ENCODE measurements at regions of chr6 and their contacts with region 1.

Region 1: GRCh38 chr6:33200219-33201146 is at the starts of genes RXRB and SLC39A7:
- DNase-seq: peak; percentile 100
- H3K4me3 ChIP-seq: peak within 1 kb of the TSS; percentile 80
- H3K27ac ChIP-seq: peak within 1 kb of the TSS; percentile 95
- H3K4me1 ChIP-seq: peaks cover 25% of the 10 kb centered on the region
- H3K27me3 ChIP-seq: no peaks in the 10 kb centered on the region
- CTCF ChIP-seq: no peak
- total RNA-seq, gene RXRB: 42.7 and 43.6 TPM in 2 replicates
- total RNA-seq, gene SLC39A7: 119 and 124 TPM in 2 replicates

Region 2: GRCh38 chr6:32703347-32703746 is 497.1 kb before region 1 on chr6:
- CTCF ChIA-PET with region 1: no interaction called
- POLR2A ChIA-PET with region 1: no interaction called
- intact Hi-C with region 1: no loop called
- DNase-seq: no peak
- H3K4me3 ChIP-seq: no peak overlapping the region
- H3K27ac ChIP-seq: no peak overlapping the region
- H3K4me1 ChIP-seq: no peaks in the 10 kb centered on the region
- H3K27me3 ChIP-seq: peaks cover 24% of the 10 kb centered on the region
- CTCF ChIP-seq: no peak

Region 3: GRCh38 chr6:32825966-32826365 is 374.5 kb before region 1 on chr6:
- CTCF ChIA-PET with region 1: no interaction called
- POLR2A ChIA-PET with region 1: no interaction called
- intact Hi-C with region 1: no loop called
- DNase-seq: peak; percentile 40
- H3K4me3 ChIP-seq: no peak overlapping the region
- H3K27ac ChIP-seq: no peak overlapping the region
- H3K4me1 ChIP-seq: no peaks in the 10 kb centered on the region
- H3K27me3 ChIP-seq: no peaks in the 10 kb centered on the region
- CTCF ChIP-seq: peak; percentile 49

Region 4: DNA sequence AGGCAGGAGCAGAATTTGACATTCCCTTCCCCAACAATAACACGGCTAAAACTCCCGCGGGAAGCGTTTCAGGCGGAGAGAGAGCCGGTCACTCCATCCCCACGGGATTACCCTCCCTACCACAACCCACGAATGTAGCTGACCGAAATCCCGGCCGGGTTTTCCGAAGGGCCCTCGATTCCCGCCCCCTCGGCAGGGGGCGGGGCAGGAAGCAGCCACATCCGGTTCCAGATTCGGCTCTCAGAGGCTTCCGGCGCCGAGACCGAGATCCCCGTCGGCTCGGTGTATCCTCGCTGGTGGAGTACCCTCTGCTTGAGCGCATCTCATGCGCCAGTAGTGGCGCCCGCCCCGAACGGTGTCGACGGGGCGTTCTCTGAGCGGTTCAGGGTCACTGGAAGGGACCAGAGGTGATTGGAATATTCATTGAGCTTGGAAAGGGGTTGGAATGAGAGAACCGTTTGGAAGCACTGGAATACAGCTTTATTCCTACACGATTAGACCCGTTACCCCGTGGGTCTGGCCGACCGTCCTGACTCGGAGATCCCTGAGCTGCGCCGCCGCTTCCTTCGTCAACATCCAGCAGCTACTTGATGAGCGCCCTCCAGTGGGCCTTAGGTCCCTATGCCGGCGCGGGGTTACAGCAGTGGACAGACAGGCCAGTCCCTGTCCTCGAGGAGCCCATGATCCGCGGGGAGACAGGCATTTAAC is 98.9 kb after region 1 on chr6:
- CTCF ChIA-PET with region 1: no interaction called
- POLR2A ChIA-PET with region 1: no interaction called
- intact Hi-C with region 1: loop called (anchors 5 kb)
- DNase-seq: peak; percentile 98
- H3K4me3 ChIP-seq: peak overlapping the region; percentile 75
- H3K27ac ChIP-seq: peak overlapping the region; percentile 92
- H3K4me1 ChIP-seq: peaks cover 6% of the 10 kb centered on the region
- H3K27me3 ChIP-seq: no peaks in the 10 kb centered on the region
- CTCF ChIP-seq: peak; percentile 77

Region 5: DNA sequence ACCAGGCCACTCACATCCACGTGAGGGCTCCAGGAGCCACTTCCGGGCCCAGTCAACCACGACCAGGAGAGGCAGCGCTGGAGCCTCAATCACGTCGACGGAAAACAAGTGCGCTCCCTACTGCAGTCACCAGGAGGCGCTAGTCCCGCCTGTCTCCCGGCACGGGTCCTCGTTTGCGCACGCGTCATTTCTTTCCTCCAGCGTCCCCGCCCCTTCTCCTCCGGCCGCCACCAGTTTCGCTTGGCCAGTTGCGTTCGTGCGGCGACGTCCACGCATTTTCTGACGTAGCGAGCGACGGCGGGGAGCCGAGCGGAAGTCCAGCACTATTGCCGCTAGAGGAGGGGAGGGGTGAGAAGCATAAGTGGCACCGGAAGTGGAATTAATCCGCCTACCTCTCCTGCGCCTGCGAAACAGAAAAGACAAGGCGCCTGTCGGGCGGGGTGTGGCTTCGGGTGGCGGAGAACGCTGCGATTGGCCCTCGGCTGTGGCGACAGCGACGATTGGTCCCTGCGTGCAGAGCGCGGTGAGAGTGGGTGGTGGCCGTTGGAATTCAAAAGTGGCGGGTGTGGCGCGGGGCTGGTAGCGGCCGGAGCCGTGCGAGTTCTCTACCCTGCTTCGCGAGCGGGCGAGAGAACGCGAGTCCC is 190.9 kb after region 1 on chr6 and contains the start of gene KIFC1:
- CTCF ChIA-PET with region 1: no interaction called
- POLR2A ChIA-PET with region 1: no interaction called
- intact Hi-C with region 1: loop called (anchors 10 kb)
- DNase-seq: peak; percentile 100
- H3K4me3 ChIP-seq: peak within 1 kb of the TSS; percentile 98
- H3K27ac ChIP-seq: peak within 1 kb of the TSS; percentile 98
- H3K4me1 ChIP-seq: peaks cover 19% of the 10 kb centered on the region
- H3K27me3 ChIP-seq: no peaks in the 10 kb centered on the region
- CTCF ChIP-seq: peak; percentile 99
- total RNA-seq, gene KIFC1: 123 and 133 TPM in 2 replicates

Measured in A673 (cell line).